ENCODE measurements at regions of chr2 and their contacts with region 1.

Region 1: GRCh38 chr2:231482806-231483391 is 18.6 kb upstream of the NCL start:
- DNase-seq: no peak
- H3K4me3 ChIP-seq: peak overlapping the region; percentile 17; the same call in 1 of the 2 replicates
- H3K27ac ChIP-seq: no peak overlapping the region
- H3K27me3 ChIP-seq: peaks cover 6% of the 10 kb centered on the region
- CTCF ChIP-seq: peak; percentile 89

Region 2: GRCh38 chr2:231181860-231182512 is 300.9 kb before region 1 on chr2:
- CTCF ChIA-PET with region 1: no interaction called
- POLR2A ChIA-PET with region 1: no interaction called
- DNase-seq: no peak
- H3K4me3 ChIP-seq: no peak overlapping the region
- H3K27ac ChIP-seq: no peak overlapping the region
- H3K27me3 ChIP-seq: no peaks in the 10 kb centered on the region
- CTCF ChIP-seq: no peak

Region 3: DNA sequence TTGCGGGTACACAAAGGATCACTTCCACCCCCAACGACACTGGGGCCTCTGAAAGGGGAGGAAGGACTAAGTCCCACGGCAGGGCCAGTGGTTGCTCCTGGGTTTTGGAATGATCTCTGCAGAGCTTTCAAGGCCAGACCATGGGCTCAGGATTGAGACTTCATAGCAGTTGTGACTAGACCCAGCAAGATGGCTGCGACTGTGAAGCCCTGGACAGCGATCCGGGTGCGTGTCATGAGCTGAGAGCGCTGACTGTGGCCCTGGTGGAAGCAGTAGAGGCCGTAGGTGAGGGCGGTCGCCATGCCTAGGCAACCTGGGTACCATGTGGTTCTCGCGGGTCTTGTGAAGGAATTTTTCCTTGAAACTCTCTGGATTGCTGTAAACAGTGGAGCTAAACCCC is 45.9 kb before region 1 on chr2:
- CTCF ChIA-PET with region 1: no interaction called
- POLR2A ChIA-PET with region 1: no interaction called
- DNase-seq: no peak
- H3K4me3 ChIP-seq: no peak overlapping the region
- H3K27ac ChIP-seq: no peak overlapping the region
- H3K27me3 ChIP-seq: no peaks in the 10 kb centered on the region
- CTCF ChIP-seq: no peak

Region 4: GRCh38 chr2:231463698-231464575 is 19.0 kb before region 1 on chr2 and contains the start of gene NCL:
- CTCF ChIA-PET with region 1: interaction called, 13 read pairs
- POLR2A ChIA-PET with region 1: interaction called, 10 read pairs
- DNase-seq: peak; percentile 94
- H3K4me3 ChIP-seq: peak within 1 kb of the TSS; percentile 98
- H3K27ac ChIP-seq: peak within 1 kb of the TSS; percentile 99
- H3K27me3 ChIP-seq: no peaks in the 10 kb centered on the region
- CTCF ChIP-seq: no peak
- polyA plus RNA-seq, gene NCL: 165 and 225 TPM in 2 replicates

Region 5: DNA sequence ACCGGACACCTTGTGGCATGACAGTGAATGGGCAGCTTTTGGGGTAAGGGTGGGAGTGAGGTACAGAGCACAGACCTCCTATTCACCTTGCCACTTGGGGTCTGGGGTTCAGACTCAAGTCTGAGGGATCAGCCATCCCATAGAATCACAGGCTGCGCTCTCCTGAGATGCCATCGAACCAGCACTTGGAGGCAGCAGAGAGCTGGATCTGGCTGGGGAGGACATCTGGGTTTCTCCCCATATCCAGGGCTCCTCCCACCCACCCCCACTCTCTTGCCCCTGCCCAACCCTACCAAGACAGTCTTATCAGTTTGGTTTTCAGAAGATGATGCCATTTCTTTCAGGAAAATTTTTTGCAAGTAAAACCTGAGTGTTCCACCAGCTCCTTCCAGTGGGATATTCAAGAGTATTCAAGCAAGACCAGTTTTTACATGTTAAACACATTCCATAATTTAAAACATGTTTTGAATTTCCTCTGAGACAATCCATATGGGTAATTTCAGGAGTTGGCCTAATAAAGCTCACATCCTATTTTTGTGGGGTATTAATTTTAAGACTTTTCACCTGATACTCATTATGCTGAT is 80.6 kb after region 1 on chr2:
- CTCF ChIA-PET with region 1: interaction called, 87 read pairs
- POLR2A ChIA-PET with region 1: no interaction called
- DNase-seq: peak; percentile 18
- H3K4me3 ChIP-seq: no peak overlapping the region
- H3K27ac ChIP-seq: no peak overlapping the region
- H3K27me3 ChIP-seq: peaks cover 9% of the 10 kb centered on the region
- CTCF ChIP-seq: peak; percentile 77